CD4-positive, alpha-beta T cell (primary cell): ENCODE measurements at regions of chr13 and their contacts with region 1.

Region 1: DNA sequence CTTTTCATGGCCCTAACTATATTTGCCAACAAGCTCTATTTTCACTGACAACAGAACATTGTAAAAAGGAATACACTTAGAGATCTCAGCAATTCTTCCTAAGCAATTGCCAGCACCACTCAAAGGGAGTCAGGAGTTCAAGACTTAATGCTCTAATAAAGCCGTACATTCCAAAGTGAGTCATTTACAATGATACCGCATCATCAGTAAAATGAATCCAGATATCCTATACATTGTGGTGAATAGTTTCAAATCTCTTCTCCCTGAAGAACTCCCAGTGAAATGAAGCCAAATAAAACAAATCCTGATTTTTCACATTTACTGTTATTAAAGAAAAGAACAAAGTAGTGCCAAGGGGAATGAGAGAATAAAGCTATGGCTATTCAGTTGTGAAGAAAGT is 2898.7 kb upstream of the PCDH20 start:
- DNase-seq: no peak
- ATAC-seq: no peak
- H3K4me3 ChIP-seq: no peak overlapping the region
- H3K4me3 Mint-ChIP-seq: no peak overlapping the region
- H3K27ac ChIP-seq: no peak overlapping the region
- H3K27ac Mint-ChIP-seq: no peak overlapping the region
- H3K4me1 ChIP-seq: no peaks in the 10 kb centered on the region
- H3K4me1 Mint-ChIP-seq: no peaks in the 10 kb centered on the region
- H3K27me3 ChIP-seq: no peaks in the 10 kb centered on the region
- H3K27me3 Mint-ChIP-seq: no peaks in the 10 kb centered on the region
- CTCF ChIP-seq: no peak

Region 2: GRCh38 chr13:62444805-62445204 is 1869.5 kb before region 1 on chr13:
- CTCF ChIA-PET with region 1: no interaction called
- POLR2A ChIA-PET with region 1: no interaction called
- intact Hi-C with region 1: loop called in 1 of 2 experiments (anchors 5 kb)
- DNase-seq: no peak
- ATAC-seq: no peak
- H3K4me3 ChIP-seq: no peak overlapping the region
- H3K4me3 Mint-ChIP-seq: no peak overlapping the region
- H3K27ac ChIP-seq: no peak overlapping the region
- H3K27ac Mint-ChIP-seq: no peak overlapping the region
- H3K4me1 ChIP-seq: no peaks in the 10 kb centered on the region
- H3K4me1 Mint-ChIP-seq: no peaks in the 10 kb centered on the region
- H3K27me3 ChIP-seq: no peaks in the 10 kb centered on the region
- H3K27me3 Mint-ChIP-seq: no peaks in the 10 kb centered on the region
- CTCF ChIP-seq: no peak

Region 3: DNA sequence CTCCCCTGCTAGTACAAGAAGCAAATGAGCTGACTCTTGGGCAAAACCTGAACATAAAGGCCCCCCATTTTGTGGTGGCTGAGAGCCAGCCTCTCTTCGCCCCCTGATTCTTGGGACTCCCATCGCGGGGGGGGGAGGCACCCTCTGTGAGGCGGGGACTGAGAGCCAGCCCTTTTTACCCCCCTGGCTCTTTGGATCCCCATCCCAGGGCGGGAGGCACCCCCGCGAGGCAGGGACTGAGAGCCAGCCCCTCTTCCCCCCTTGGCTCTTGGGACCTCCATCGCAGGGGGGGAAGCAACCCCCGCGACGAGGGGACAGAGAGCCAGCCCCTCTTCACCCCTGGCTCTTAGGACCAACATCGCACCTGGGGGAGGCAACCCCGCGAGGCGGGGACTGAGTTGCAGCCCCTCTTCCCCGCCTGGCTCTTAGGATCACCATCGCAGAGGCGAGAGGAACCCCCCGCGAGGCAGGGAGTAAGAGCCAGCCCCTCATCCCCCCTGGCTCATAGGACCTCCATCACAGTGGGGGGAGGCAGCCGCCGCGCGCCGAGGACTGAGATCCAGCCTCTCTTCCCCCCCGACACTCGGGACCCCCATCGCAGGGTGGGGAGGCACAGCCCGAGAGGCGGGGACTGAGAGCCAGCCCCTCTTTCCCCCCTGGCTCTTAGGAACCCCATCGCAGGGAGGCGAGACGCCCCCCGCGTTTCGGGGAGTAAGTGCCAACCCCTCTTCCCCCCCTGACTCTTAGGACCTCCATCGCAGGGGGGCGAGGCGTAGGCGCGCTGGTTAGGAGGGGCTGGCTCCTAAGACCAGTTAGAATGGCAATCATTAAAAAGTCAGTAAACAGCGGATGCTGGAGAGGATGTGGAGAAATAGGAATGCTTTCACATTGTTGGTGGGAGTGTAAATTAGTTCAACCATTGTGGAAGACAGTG is 470.3 kb before region 1 on chr13:
- CTCF ChIA-PET with region 1: no interaction called
- POLR2A ChIA-PET with region 1: no interaction called
- intact Hi-C with region 1: no loop called
- DNase-seq: no peak
- ATAC-seq: no peak
- H3K4me3 ChIP-seq: no peak overlapping the region
- H3K4me3 Mint-ChIP-seq: no peak overlapping the region
- H3K27ac ChIP-seq: no peak overlapping the region
- H3K27ac Mint-ChIP-seq: no peak overlapping the region
- H3K4me1 ChIP-seq: no peaks in the 10 kb centered on the region
- H3K4me1 Mint-ChIP-seq: no peaks in the 10 kb centered on the region
- H3K27me3 ChIP-seq: no peaks in the 10 kb centered on the region
- H3K27me3 Mint-ChIP-seq: no peaks in the 10 kb centered on the region
- CTCF ChIP-seq: no peak

Region 4: GRCh38 chr13:64256751-64257150 is 57.6 kb before region 1 on chr13:
- CTCF ChIA-PET with region 1: no interaction called
- POLR2A ChIA-PET with region 1: no interaction called
- intact Hi-C with region 1: no loop called
- DNase-seq: no peak
- ATAC-seq: no peak
- H3K4me3 ChIP-seq: no peak overlapping the region
- H3K4me3 Mint-ChIP-seq: no peak overlapping the region
- H3K27ac ChIP-seq: no peak overlapping the region
- H3K27ac Mint-ChIP-seq: no peak overlapping the region
- H3K4me1 ChIP-seq: no peaks in the 10 kb centered on the region
- H3K4me1 Mint-ChIP-seq: no peaks in the 10 kb centered on the region
- H3K27me3 ChIP-seq: no peaks in the 10 kb centered on the region
- H3K27me3 Mint-ChIP-seq: no peaks in the 10 kb centered on the region
- CTCF ChIP-seq: no peak